CD4-positive, alpha-beta T cell (primary cell): ENCODE measurements at regions of chr1 and their contacts with region 1.

Region 1: GRCh38 chr1:115877511-115877910 is 36.6 kb upstream of the NHLH2 start:
- DNase-seq: no peak
- ATAC-seq: no peak
- H3K4me3 ChIP-seq: no peak overlapping the region
- H3K4me3 Mint-ChIP-seq: no peak overlapping the region
- H3K27ac ChIP-seq: no peak overlapping the region
- H3K27ac Mint-ChIP-seq: no peak overlapping the region
- H3K4me1 ChIP-seq: no peaks in the 10 kb centered on the region
- H3K4me1 Mint-ChIP-seq: no peaks in the 10 kb centered on the region
- H3K27me3 ChIP-seq: peaks cover 3 to 10% of the 10 kb centered on the region in 2 experiments
- H3K27me3 Mint-ChIP-seq: peaks cover 39% of the 10 kb centered on the region
- CTCF ChIP-seq: no peak

Region 2: GRCh38 chr1:115829023-115829693 is 48.4 kb before region 1 on chr1:
- CTCF ChIA-PET with region 1: no interaction called
- POLR2A ChIA-PET with region 1: no interaction called
- intact Hi-C with region 1: loop called in 1 of 2 experiments (anchors 5 kb)
- DNase-seq: peak in 2 of 14 experiments; percentile 39 to 67
- ATAC-seq: no peak
- H3K4me3 ChIP-seq: no peak overlapping the region
- H3K4me3 Mint-ChIP-seq: peak overlapping the region; percentile 12
- H3K27ac ChIP-seq: no peak overlapping the region
- H3K27ac Mint-ChIP-seq: no peak overlapping the region
- H3K4me1 ChIP-seq: peaks cover 8% of the 10 kb centered on the region
- H3K4me1 Mint-ChIP-seq: peaks cover 5% of the 10 kb centered on the region
- H3K27me3 ChIP-seq: peaks cover 36 to 46% of the 10 kb centered on the region in 2 experiments
- H3K27me3 Mint-ChIP-seq: peaks cover 81% of the 10 kb centered on the region
- CTCF ChIP-seq: no peak

Region 3: DNA sequence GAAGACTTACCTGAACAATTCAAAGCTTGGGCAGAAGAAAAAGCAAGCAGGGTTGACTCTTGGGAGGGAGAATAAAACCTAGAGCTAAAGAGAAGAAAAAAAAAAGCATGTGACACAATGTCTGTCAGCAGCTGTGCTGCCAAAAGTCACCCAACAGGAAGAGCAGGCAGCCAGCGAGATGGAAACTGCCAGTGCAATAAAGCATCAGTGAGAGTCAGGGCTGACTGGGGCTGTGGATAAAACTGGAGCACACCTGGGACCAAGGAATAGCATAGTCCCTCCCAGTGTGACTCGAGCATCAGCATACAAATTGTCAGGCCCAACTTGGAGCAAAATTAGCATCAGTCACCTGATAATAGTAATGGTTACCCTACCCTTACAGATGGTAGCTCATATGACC is 33.8 kb after region 1 on chr1:
- CTCF ChIA-PET with region 1: no interaction called
- POLR2A ChIA-PET with region 1: no interaction called
- intact Hi-C with region 1: no loop called
- DNase-seq: no peak
- ATAC-seq: no peak
- H3K4me3 ChIP-seq: no peak overlapping the region
- H3K4me3 Mint-ChIP-seq: no peak overlapping the region
- H3K27ac ChIP-seq: no peak overlapping the region
- H3K27ac Mint-ChIP-seq: no peak overlapping the region
- H3K4me1 ChIP-seq: no peaks in the 10 kb centered on the region
- H3K4me1 Mint-ChIP-seq: no peaks in the 10 kb centered on the region
- H3K27me3 ChIP-seq: peaks cover 0 to 2% of the 10 kb centered on the region in 2 experiments
- H3K27me3 Mint-ChIP-seq: peaks cover 3% of the 10 kb centered on the region
- CTCF ChIP-seq: no peak